CD4-positive, alpha-beta T cell (primary cell): ENCODE measurements at regions of chr4 and their contacts with region 1.

Region 1: DNA sequence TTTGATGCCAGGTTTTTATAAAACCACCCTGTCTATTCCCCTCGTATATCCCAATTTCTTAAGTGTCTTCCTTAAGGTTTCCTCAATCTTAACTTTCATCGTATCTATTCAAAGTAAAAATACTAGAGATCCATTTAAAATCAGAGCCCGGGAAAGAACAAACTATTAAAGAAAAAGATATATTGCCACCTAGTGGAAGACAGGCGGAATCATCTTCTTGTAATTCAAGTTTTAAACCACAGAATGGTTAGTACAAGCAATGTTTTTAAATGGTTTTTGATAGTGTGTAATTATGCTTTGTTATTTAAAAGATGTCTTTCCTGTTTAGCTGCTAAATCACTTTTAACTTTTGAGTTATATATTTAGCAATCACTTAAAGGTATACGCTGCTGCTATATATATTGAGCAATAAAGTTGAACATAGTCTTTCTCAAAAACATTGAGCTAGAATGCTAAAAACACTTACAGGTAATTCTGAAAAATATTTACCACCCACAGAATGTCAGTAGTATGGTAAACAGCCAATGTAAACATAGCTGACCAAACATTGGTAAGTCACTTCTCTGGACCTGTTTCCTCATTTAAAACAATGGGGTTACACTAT is 18.2 kb downstream of the PRDM8 start:
- DNase-seq: peak in 3 of 14 experiments; percentile 50 to 59 (median 51)
- ATAC-seq: no peak
- H3K4me3 ChIP-seq: no peak overlapping the region
- H3K4me3 Mint-ChIP-seq: no peak overlapping the region
- H3K27ac ChIP-seq: no peak overlapping the region
- H3K27ac Mint-ChIP-seq: no peak overlapping the region
- H3K4me1 ChIP-seq: no peaks in the 10 kb centered on the region
- H3K4me1 Mint-ChIP-seq: no peaks in the 10 kb centered on the region
- H3K27me3 ChIP-seq: peaks cover 3 to 30% of the 10 kb centered on the region in 2 experiments
- H3K27me3 Mint-ChIP-seq: peaks cover 38% of the 10 kb centered on the region
- CTCF ChIP-seq: peak; percentile 92

Region 2: GRCh38 chr4:78951862-78952472 is 1263.6 kb before region 1 on chr4:
- CTCF ChIA-PET with region 1: interaction called, 3 read pairs
- POLR2A ChIA-PET with region 1: no interaction called
- intact Hi-C with region 1: loop called in 1 of 2 experiments (anchors 2 kb)
- DNase-seq: peak in 5 of 14 experiments; percentile 9 to 69 (median 53)
- ATAC-seq: peak; percentile 65
- H3K4me3 ChIP-seq: no peak overlapping the region
- H3K4me3 Mint-ChIP-seq: no peak overlapping the region
- H3K27ac ChIP-seq: no peak overlapping the region
- H3K27ac Mint-ChIP-seq: no peak overlapping the region
- H3K4me1 ChIP-seq: no peaks in the 10 kb centered on the region
- H3K4me1 Mint-ChIP-seq: no peaks in the 10 kb centered on the region
- H3K27me3 ChIP-seq: peaks cover 2 to 3% of the 10 kb centered on the region in 2 experiments
- H3K27me3 Mint-ChIP-seq: peaks cover 17% of the 10 kb centered on the region
- CTCF ChIP-seq: peak; percentile 75

Region 3: GRCh38 chr4:79042079-79042674 is 1173.4 kb before region 1 on chr4:
- CTCF ChIA-PET with region 1: no interaction called
- POLR2A ChIA-PET with region 1: no interaction called
- intact Hi-C with region 1: loop called in 1 of 2 experiments (anchors 5 kb)
- DNase-seq: peak in 1 of 14 experiments; percentile 3
- ATAC-seq: no peak
- H3K4me3 ChIP-seq: no peak overlapping the region
- H3K4me3 Mint-ChIP-seq: no peak overlapping the region
- H3K27ac ChIP-seq: no peak overlapping the region
- H3K27ac Mint-ChIP-seq: no peak overlapping the region
- H3K4me1 ChIP-seq: no peaks in the 10 kb centered on the region
- H3K4me1 Mint-ChIP-seq: no peaks in the 10 kb centered on the region
- H3K27me3 ChIP-seq: no peaks in the 10 kb centered on the region
- H3K27me3 Mint-ChIP-seq: no peaks in the 10 kb centered on the region
- CTCF ChIP-seq: no peak

Region 4: GRCh38 chr4:79576429-79576753 is 639.2 kb before region 1 on chr4:
- CTCF ChIA-PET with region 1: no interaction called
- POLR2A ChIA-PET with region 1: no interaction called
- intact Hi-C with region 1: loop called in 1 of 2 experiments (anchors 10 kb)
- DNase-seq: peak in 1 of 14 experiments; percentile 1
- ATAC-seq: no peak
- H3K4me3 ChIP-seq: no peak overlapping the region
- H3K4me3 Mint-ChIP-seq: no peak overlapping the region
- H3K27ac ChIP-seq: no peak overlapping the region
- H3K27ac Mint-ChIP-seq: no peak overlapping the region
- H3K4me1 ChIP-seq: no peaks in the 10 kb centered on the region
- H3K4me1 Mint-ChIP-seq: no peaks in the 10 kb centered on the region
- H3K27me3 ChIP-seq: no peaks in the 10 kb centered on the region
- H3K27me3 Mint-ChIP-seq: no peaks in the 10 kb centered on the region
- CTCF ChIP-seq: peak; percentile 14

Region 5: DNA sequence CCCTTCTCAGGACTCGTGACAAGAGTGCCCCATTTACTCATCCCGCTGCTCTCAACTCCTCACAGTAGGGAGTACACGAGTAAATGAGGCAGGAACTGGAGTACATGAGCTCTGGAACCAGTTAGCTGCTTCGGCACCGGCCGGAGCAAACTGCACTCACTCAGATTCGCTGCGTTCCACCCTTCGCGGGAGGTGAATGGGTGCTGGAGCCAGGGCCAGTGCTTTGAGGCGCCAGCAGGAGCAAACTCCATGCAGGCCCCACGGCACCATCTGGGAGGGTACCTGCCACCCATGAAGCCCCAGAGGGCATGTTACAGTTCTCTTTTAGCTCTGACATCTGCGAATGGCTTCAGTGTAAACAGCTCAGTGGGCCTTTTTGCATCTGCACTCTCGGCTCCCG is 492.0 kb before region 1 on chr4:
- CTCF ChIA-PET with region 1: no interaction called
- POLR2A ChIA-PET with region 1: no interaction called
- intact Hi-C with region 1: no loop called
- DNase-seq: no peak
- ATAC-seq: no peak
- H3K4me3 ChIP-seq: no peak overlapping the region
- H3K4me3 Mint-ChIP-seq: no peak overlapping the region
- H3K27ac ChIP-seq: no peak overlapping the region
- H3K27ac Mint-ChIP-seq: no peak overlapping the region
- H3K4me1 ChIP-seq: no peaks in the 10 kb centered on the region
- H3K4me1 Mint-ChIP-seq: no peaks in the 10 kb centered on the region
- H3K27me3 ChIP-seq: no peaks in the 10 kb centered on the region
- H3K27me3 Mint-ChIP-seq: no peaks in the 10 kb centered on the region
- CTCF ChIP-seq: no peak

Region 6: DNA sequence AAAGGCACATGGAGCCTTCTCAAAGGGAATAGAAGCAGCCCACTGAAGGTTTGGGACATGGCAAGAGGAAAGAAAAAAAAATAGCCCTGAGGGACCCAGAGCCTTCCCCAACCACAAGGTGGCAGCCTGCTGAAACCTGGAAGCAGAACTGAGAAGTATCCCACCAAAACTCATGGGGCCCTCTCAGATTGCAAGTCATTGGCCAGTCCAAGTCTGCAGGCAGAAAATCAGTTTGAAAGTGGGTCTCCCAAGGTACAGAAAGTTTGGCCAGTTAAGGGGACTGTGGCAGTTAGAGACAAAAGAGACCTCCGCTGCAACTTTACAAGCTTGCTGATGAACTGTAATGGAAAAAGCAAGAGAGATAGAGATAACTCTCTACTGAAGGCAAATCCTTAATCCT is 298.3 kb before region 1 on chr4:
- CTCF ChIA-PET with region 1: interaction called, 5 read pairs
- POLR2A ChIA-PET with region 1: no interaction called
- intact Hi-C with region 1: loop called (anchors 1 to 2 kb)
- DNase-seq: peak; percentile 9 to 65 (median 27)
- ATAC-seq: no peak
- H3K4me3 ChIP-seq: no peak overlapping the region
- H3K4me3 Mint-ChIP-seq: no peak overlapping the region
- H3K27ac ChIP-seq: no peak overlapping the region
- H3K27ac Mint-ChIP-seq: no peak overlapping the region
- H3K4me1 ChIP-seq: no peaks in the 10 kb centered on the region
- H3K4me1 Mint-ChIP-seq: peaks cover 10% of the 10 kb centered on the region
- H3K27me3 ChIP-seq: no peaks in the 10 kb centered on the region
- H3K27me3 Mint-ChIP-seq: no peaks in the 10 kb centered on the region
- CTCF ChIP-seq: peak; percentile 60

Region 7: GRCh38 chr4:80202190-80202711 is 13.3 kb before region 1 on chr4:
- CTCF ChIA-PET with region 1: interaction called, 9 read pairs
- POLR2A ChIA-PET with region 1: interaction called, 5 read pairs
- intact Hi-C with region 1: loop called in 1 of 2 experiments (anchors 1 kb)
- DNase-seq: peak; percentile 59 to 90 (median 76)
- ATAC-seq: peak; percentile 64
- H3K4me3 ChIP-seq: peak overlapping the region; percentile 79
- H3K4me3 Mint-ChIP-seq: peak overlapping the region; percentile 89
- H3K27ac ChIP-seq: peak overlapping the region; percentile 53 to 61
- H3K27ac Mint-ChIP-seq: peak overlapping the region; percentile 71
- H3K4me1 ChIP-seq: peaks cover 22% of the 10 kb centered on the region
- H3K4me1 Mint-ChIP-seq: peaks cover 27% of the 10 kb centered on the region
- H3K27me3 ChIP-seq: peaks cover 6 to 7% of the 10 kb centered on the region in 2 experiments
- H3K27me3 Mint-ChIP-seq: peaks cover 11% of the 10 kb centered on the region
- CTCF ChIP-seq: peak; percentile 73